ENCODE measurements at regions of chr16 and their contacts with region 1.

Region 1: GRCh38 chr16:68085259-68086071 is at the start of gene NFATC3:
- DNase-seq: peak; percentile 88
- H3K4me3 ChIP-seq: peak within 1 kb of the TSS; percentile 81
- H3K27ac ChIP-seq: peak within 1 kb of the TSS; percentile 81
- H3K27me3 ChIP-seq: no peaks in the 10 kb centered on the region
- CTCF ChIP-seq: no peak
- polyA plus RNA-seq, gene NFATC3: 13.8 and 16.7 TPM in 2 replicates

Region 2: GRCh38 chr16:68064791-68065365 is 20.6 kb before region 1 on chr16:
- CTCF ChIA-PET with region 1: interaction called, 11 read pairs
- POLR2A ChIA-PET with region 1: interaction called, 3 read pairs
- DNase-seq: no peak
- H3K4me3 ChIP-seq: no peak overlapping the region
- H3K27ac ChIP-seq: peak overlapping the region; percentile 73
- H3K27me3 ChIP-seq: no peaks in the 10 kb centered on the region
- CTCF ChIP-seq: peak; percentile 86

Region 3: DNA sequence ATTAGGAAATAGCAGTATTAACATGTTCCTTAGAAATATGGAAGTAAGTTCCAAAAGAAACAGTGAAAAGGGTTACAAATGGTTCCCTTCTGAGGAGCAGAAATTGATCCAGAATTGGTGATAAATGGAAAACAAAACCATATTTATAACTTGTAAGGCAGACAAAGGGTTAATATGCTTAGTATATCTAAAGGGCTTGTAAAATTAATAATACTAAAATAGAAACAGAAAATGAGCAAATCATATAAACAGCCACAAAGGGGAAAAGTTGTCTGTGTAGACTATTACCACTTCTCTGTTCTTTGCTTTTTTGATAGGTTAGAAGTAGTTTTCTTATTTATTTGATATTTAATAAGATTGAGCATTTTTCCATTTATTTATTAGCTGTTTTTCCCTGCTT is 64.1 kb after region 1 on chr16:
- CTCF ChIA-PET with region 1: interaction called, 5 read pairs
- POLR2A ChIA-PET with region 1: interaction called, 11 read pairs
- DNase-seq: no peak
- H3K4me3 ChIP-seq: no peak overlapping the region
- H3K27ac ChIP-seq: no peak overlapping the region
- H3K27me3 ChIP-seq: no peaks in the 10 kb centered on the region
- CTCF ChIP-seq: no peak

Region 4: DNA sequence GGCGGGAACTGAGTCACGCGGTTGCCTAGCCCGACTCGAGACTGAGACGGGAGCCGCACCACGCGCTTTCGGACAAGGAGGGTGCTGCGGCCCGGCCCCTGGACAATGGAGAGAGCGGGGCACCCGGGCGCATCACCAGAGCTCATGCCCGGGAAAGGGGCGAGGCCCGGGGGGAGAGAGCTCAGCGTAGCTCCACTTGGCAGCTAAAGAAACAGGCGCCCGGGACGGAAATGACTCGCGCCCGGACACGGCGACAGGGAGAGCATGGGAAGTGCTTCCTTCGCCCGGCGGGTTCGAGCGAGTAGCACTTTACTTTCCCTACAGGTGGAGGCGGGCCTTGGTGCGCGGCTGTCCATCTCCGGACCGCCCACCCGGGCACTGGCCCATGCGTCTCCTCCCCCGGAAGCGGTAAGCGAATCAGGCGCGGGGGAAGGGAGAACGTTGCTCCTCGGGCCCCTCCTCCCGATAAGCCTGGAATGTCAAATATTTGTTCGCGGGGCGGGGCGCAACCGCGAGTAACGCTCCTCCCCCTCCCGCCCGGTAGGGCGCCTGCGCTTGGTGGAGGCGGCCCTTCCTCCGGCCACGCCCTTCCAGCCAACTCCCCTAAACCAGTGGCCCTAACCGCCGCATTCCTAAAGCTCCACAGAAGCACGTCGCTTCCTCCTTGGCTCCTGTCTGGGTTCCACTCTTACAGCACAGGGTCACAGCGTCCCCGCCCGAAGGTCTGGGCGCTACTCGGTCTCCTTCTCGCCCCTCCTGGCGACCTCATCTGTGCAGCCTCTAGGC is 152.0 kb after region 1 on chr16:
- CTCF ChIA-PET with region 1: no interaction called
- POLR2A ChIA-PET with region 1: interaction called, 13 read pairs
- DNase-seq: peak; percentile 94
- H3K4me3 ChIP-seq: peak overlapping the region; percentile 69
- H3K27ac ChIP-seq: peak overlapping the region; percentile 94
- H3K27me3 ChIP-seq: no peaks in the 10 kb centered on the region
- CTCF ChIP-seq: no peak

Measured in AG04450 (cell line).